ENCODE measurements at regions of chr21 and their contacts with region 1.

Region 1: GRCh38 chr21:26850108-26850643 is 5.0 kb upstream of the ADAMTS1 start:
- DNase-seq: peak in 2 of 5 donors; percentile 72 to 85
- H3K4me3 ChIP-seq: peak overlapping the region in 1 of 3 donors; percentile 20
- H3K27ac ChIP-seq: no peak overlapping the region
- H3K4me1 ChIP-seq: peaks cover 0 to 3% (median 2%) of the 10 kb centered on the region in 3 donors
- H3K27me3 ChIP-seq: no peaks in the 10 kb centered on the region
- CTCF ChIP-seq: peak; percentile 29

Region 2: GRCh38 chr21:26674323-26674722 is 175.9 kb before region 1 on chr21:
- intact Hi-C with region 1: no loop called
- DNase-seq: no peak
- H3K4me3 ChIP-seq: no peak overlapping the region
- H3K27ac ChIP-seq: no peak overlapping the region
- H3K4me1 ChIP-seq: no peaks in the 10 kb centered on the region
- H3K27me3 ChIP-seq: no peaks in the 10 kb centered on the region
- CTCF ChIP-seq: no peak

Region 3: GRCh38 chr21:26900980-26901379 is 50.8 kb after region 1 on chr21:
- intact Hi-C with region 1: no loop called
- DNase-seq: no peak
- H3K4me3 ChIP-seq: no peak overlapping the region
- H3K27ac ChIP-seq: no peak overlapping the region
- H3K4me1 ChIP-seq: no peaks in the 10 kb centered on the region
- H3K27me3 ChIP-seq: no peaks in the 10 kb centered on the region
- CTCF ChIP-seq: no peak

Region 4: DNA sequence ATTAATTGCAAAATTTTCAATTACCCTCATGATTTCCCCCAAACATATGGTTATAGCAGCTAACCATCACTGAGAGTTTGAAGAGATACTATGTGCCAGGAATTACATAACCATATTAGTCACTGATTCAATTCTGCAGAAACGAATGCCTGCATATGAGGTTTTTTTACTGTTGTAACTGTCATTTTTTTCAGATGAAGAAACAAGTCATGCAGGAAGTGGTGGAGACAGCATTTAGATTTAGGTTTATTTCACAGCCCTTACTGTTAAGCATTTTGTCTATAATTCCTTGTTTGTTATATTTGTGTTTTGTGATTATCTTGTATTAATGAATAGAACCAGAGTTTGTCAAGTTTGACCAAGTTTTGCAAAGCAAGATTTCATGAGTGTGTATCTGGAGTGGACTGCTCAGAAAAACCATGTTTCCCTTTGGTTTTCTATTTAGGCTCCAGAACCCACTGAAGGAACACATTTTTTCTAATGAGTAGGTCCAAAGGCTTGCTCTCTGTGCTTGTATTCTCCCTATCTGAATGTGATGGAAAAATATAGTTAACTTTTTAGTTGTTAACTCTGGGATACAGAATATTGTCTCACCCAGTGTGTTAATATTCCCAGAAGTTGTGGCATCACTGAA is 425.2 kb after region 1 on chr21:
- intact Hi-C with region 1: no loop called
- DNase-seq: no peak
- H3K4me3 ChIP-seq: no peak overlapping the region
- H3K27ac ChIP-seq: no peak overlapping the region
- H3K4me1 ChIP-seq: no peaks in the 10 kb centered on the region
- H3K27me3 ChIP-seq: no peaks in the 10 kb centered on the region
- CTCF ChIP-seq: no peak

Region 5: GRCh38 chr21:27700974-27701614 is 850.9 kb after region 1 on chr21:
- intact Hi-C with region 1: loop called (anchors 5 kb)
- DNase-seq: peak; percentile 84 to 96 (median 89)
- H3K4me3 ChIP-seq: no peak overlapping the region
- H3K27ac ChIP-seq: no peak overlapping the region
- H3K4me1 ChIP-seq: no peaks in the 10 kb centered on the region
- H3K27me3 ChIP-seq: no peaks in the 10 kb centered on the region
- CTCF ChIP-seq: peak; percentile 87

Region 6: GRCh38 chr21:27802816-27803475 is 952.8 kb after region 1 on chr21:
- intact Hi-C with region 1: loop called (anchors 10 kb)
- DNase-seq: peak in 1 of 5 donors; percentile 37
- H3K4me3 ChIP-seq: peak overlapping the region in 1 of 3 donors; percentile 40
- H3K27ac ChIP-seq: no peak overlapping the region
- H3K4me1 ChIP-seq: no peaks in the 10 kb centered on the region
- H3K27me3 ChIP-seq: no peaks in the 10 kb centered on the region
- CTCF ChIP-seq: peak; percentile 70